ENCODE measurements at regions of chr1 and their contacts with region 1.

Region 1: DNA sequence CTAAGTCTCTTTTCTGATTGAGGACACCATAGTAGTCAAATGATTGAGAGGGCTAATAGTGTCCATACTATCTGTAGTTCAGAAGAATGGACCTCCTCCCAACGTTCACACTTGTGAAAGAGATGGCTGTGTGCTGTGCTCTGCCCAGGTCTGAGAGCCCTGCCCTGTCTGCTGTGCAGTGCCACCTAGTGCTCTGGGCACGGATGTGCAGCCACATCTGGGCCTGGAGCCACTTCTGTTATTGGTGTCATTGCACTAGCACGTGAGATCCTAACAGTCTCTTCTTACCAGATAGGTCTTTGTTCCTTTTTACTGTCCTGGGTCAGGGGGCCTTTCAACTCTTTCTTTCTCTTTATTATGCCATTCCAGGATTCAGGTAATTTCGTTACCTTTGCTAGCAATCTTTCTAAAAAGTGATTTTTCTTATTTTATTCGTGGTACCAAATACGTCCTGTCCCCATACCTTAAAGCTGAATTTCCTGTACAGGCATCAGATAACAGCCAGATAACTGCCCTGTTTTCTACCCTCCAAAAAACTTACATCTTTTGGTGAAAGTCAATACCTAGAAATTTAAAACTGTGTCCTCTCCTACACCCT is 21.7 kb downstream of the INTS3 start:
- DNase-seq: peak; percentile 60
- ATAC-seq: peak; percentile 100
- H3K4me3 Mint-ChIP-seq: no peak overlapping the region
- H3K27ac Mint-ChIP-seq: peak overlapping the region; percentile 3
- H3K4me1 Mint-ChIP-seq: peaks cover 14% of the 10 kb centered on the region
- H3K27me3 Mint-ChIP-seq: no peaks in the 10 kb centered on the region
- CTCF ChIP-seq: no peak

Region 2: GRCh38 chr1:153677718-153678505 is 71.6 kb before region 1 on chr1:
- CTCF ChIA-PET with region 1: interaction called, 23 read pairs
- POLR2A ChIA-PET with region 1: interaction called, 6 read pairs
- intact Hi-C with region 1: loop called (anchors 1 kb)
- DNase-seq: peak; percentile 40
- ATAC-seq: peak; percentile 67
- H3K4me3 Mint-ChIP-seq: peak overlapping the region; percentile 86
- H3K27ac Mint-ChIP-seq: no peak overlapping the region
- H3K4me1 Mint-ChIP-seq: peaks cover 21% of the 10 kb centered on the region
- H3K27me3 Mint-ChIP-seq: peaks cover 31% of the 10 kb centered on the region
- CTCF ChIP-seq: peak; percentile 73

Region 3: DNA sequence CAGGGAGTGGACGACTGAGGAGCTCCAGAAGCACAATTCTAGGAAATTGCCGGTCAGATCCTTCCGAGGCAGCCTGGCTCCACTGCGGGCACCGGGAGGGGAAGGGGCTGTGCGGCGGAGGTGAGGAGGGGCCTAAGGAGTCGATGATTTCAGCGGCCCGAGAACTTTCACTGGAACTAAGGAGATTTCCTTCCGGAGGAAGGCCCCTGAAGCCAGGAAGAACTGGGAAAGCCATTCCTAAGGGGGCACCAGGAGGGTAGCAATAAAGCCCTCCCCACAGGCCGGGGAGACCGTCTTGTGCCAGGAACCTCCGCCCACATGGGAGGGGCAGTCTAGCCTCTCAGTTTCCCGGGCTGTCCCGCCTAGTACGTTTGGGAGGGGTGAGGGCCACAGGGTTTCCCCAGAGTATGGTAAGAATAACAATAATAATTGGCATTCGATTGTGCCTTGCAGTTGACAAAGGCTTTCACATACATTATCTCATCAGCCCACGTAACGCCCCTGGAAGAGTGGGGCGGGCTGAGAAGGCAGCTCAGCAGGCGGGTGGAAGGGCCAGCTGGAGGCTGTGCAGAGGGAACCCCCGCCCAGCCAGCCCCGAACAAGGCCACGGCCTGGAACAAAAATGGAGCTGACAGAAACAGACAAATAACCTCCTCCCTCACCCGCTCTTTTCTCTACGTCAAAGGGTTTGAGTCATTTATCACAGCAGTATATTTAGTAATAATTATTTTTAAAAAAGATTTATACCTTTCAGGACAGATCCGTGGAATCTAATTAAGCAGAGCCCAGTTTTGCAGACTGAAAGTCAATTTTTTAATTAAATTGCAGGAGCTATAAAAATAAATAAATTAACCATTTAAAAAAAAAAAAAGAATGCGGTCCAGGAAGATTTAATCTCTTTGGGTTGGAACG is 51.2 kb before region 1 on chr1:
- CTCF ChIA-PET with region 1: no interaction called
- POLR2A ChIA-PET with region 1: no interaction called
- intact Hi-C with region 1: no loop called
- DNase-seq: no peak
- ATAC-seq: peak; percentile 49
- H3K4me3 Mint-ChIP-seq: peak overlapping the region; percentile 57
- H3K27ac Mint-ChIP-seq: no peak overlapping the region
- H3K4me1 Mint-ChIP-seq: peaks cover 4% of the 10 kb centered on the region
- H3K27me3 Mint-ChIP-seq: no peaks in the 10 kb centered on the region
- CTCF ChIP-seq: no peak

Region 4: DNA sequence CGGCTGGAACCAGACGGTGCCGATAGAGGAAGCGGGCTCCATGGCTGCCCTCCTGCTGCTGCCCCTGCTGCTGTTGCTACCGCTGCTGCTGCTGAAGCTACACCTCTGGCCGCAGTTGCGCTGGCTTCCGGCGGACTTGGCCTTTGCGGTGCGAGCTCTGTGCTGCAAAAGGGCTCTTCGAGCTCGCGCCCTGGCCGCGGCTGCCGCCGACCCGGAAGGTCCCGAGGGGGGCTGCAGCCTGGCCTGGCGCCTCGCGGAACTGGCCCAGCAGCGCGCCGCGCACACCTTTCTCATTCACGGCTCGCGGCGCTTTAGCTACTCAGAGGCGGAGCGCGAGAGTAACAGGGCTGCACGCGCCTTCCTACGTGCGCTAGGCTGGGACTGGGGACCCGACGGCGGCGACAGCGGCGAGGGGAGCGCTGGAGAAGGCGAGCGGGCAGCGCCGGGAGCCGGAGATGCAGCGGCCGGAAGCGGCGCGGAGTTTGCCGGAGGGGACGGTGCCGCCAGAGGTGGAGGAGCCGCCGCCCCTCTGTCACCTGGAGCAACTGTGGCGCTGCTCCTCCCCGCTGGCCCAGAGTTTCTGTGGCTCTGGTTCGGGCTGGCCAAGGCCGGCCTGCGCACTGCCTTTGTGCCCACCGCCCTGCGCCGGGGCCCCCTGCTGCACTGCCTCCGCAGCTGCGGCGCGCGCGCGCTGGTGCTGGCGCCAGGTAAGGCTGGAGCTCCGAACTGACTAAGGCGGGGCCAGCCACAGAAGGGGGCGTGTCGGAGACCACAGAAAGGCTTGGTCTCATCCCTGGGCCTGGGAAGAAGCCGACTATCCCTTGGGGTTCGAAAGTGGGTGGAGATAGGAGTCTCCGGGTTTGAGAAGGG is 26.2 kb after region 1 on chr1:
- CTCF ChIA-PET with region 1: interaction called, 3 read pairs
- POLR2A ChIA-PET with region 1: no interaction called
- intact Hi-C with region 1: loop called (anchors 2 kb)
- DNase-seq: peak; percentile 50
- ATAC-seq: peak; percentile 71
- H3K4me3 Mint-ChIP-seq: peak overlapping the region; percentile 86
- H3K27ac Mint-ChIP-seq: peak overlapping the region; percentile 75
- H3K4me1 Mint-ChIP-seq: peaks cover 31% of the 10 kb centered on the region
- H3K27me3 Mint-ChIP-seq: no peaks in the 10 kb centered on the region
- CTCF ChIP-seq: no peak